T-cell (primary cell): ENCODE measurements at regions of chr3 and their contacts with region 1.

Region 1: GRCh38 chr3:1609416-1609815 is 489.2 kb upstream of the CNTN4 start:
- DNase-seq: no peak
- ATAC-seq: no peak
- H3K4me3 ChIP-seq: no peak overlapping the region
- H3K4me3 Mint-ChIP-seq: no peak overlapping the region
- H3K27ac ChIP-seq: no peak overlapping the region
- H3K27ac Mint-ChIP-seq: no peak overlapping the region
- H3K4me1 ChIP-seq: no peaks in the 10 kb centered on the region
- H3K4me1 Mint-ChIP-seq: no peaks in the 10 kb centered on the region
- H3K27me3 ChIP-seq: no peaks in the 10 kb centered on the region
- H3K27me3 Mint-ChIP-seq: no peaks in the 10 kb centered on the region

Region 2: DNA sequence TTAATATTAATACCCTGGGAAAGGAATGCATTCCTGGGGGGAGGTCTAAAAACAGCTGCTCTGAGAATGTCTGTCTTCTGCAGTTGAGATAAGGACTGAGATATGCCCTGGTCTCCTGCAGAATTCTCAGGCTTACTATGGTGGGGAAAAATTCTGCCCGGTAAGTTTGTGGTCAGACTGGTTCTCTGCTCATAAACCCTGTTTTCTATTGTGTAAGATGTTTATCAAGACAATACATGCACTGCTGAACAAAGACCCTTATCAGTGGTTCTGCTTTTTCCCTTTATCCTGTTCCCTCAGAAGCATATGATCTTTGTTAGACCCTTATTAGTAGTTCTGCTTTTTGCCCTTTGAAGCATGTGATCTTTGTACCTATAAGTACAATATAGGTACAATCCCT is 22.0 kb before region 1 on chr3:
- CTCF ChIA-PET with region 1: no interaction called
- POLR2A ChIA-PET with region 1: interaction called in 1 of 2 experiments, 10 read pairs
- DNase-seq: no peak
- ATAC-seq: no peak
- H3K4me3 ChIP-seq: no peak overlapping the region
- H3K4me3 Mint-ChIP-seq: no peak overlapping the region
- H3K27ac ChIP-seq: no peak overlapping the region
- H3K27ac Mint-ChIP-seq: no peak overlapping the region
- H3K4me1 ChIP-seq: no peaks in the 10 kb centered on the region
- H3K4me1 Mint-ChIP-seq: no peaks in the 10 kb centered on the region
- H3K27me3 ChIP-seq: no peaks in the 10 kb centered on the region
- H3K27me3 Mint-ChIP-seq: no peaks in the 10 kb centered on the region